ENCODE measurements at regions of chr10 and their contacts with region 1.

Region 1: GRCh38 chr10:45464958-45465567 is 91.0 kb downstream of the ALOX5 start:
- DNase-seq: peak; percentile 54 to 79
- H3K4me3 ChIP-seq: no peak overlapping the region
- H3K27ac ChIP-seq: no peak overlapping the region
- H3K4me1 ChIP-seq: peaks cover 0 to 8% (median under 1%) of the 10 kb centered on the region in 4 donors
- H3K27me3 ChIP-seq: no peaks in the 10 kb centered on the region
- CTCF ChIP-seq: peak; percentile 66 to 82

Region 2: GRCh38 chr10:45594276-45595106 is 129.4 kb after region 1 on chr10:
- intact Hi-C with region 1: loop called (anchors 10 kb)
- DNase-seq: peak; percentile 92 to 94
- H3K4me3 ChIP-seq: peak overlapping the region; percentile 70 to 89
- H3K27ac ChIP-seq: peak overlapping the region; percentile 57 to 80
- H3K4me1 ChIP-seq: peaks cover 0 to 24% (median 12%) of the 10 kb centered on the region in 4 donors
- H3K27me3 ChIP-seq: no peaks in the 10 kb centered on the region
- CTCF ChIP-seq: peak in 1 of 2 experiments; percentile 40